ENCODE measurements at regions of chr1 and their contacts with region 1.

Region 1: GRCh38 chr1:98794196-98794886 is 132.8 kb downstream of the SNX7 start:
- DNase-seq: peak; percentile 54
- H3K4me3 ChIP-seq: peak overlapping the region in 1 of 2 experiments; percentile 26; a peak in 1 of 4 replicates
- H3K27ac ChIP-seq: peak overlapping the region in 1 of 2 experiments; percentile 60; a peak in 1 of 4 replicates
- H3K4me1 ChIP-seq: peaks cover 0 to 4% of the 10 kb centered on the region in 2 experiments; a peak in 2 of 4 replicates
- H3K27me3 ChIP-seq: no peaks in the 10 kb centered on the region
- CTCF ChIP-seq: peak; percentile 87
- EP300 ChIP-seq: peak in 1 of 2 experiments; percentile 86; a peak in 2 of 4 replicates
- RAD21 ChIP-seq: peak; percentile 95

Region 2: GRCh38 chr1:98523256-98523655 is 271.1 kb before region 1 on chr1:
- CTCF ChIA-PET with region 1: no interaction called
- POLR2A ChIA-PET with region 1: no interaction called
- DNase-seq: no peak
- H3K4me3 ChIP-seq: no peak overlapping the region
- H3K27ac ChIP-seq: no peak overlapping the region
- H3K4me1 ChIP-seq: no peaks in the 10 kb centered on the region
- H3K27me3 ChIP-seq: no peaks in the 10 kb centered on the region
- CTCF ChIP-seq: no peak
- EP300 ChIP-seq: no peak
- RAD21 ChIP-seq: no peak

Region 3: GRCh38 chr1:98669355-98670296 is 124.7 kb before region 1 on chr1:
- CTCF ChIA-PET with region 1: no interaction called
- POLR2A ChIA-PET with region 1: no interaction called
- DNase-seq: peak; percentile 33
- H3K4me3 ChIP-seq: no peak overlapping the region; a peak in 1 of 4 replicates
- H3K27ac ChIP-seq: peak overlapping the region; percentile 83 to 89
- H3K4me1 ChIP-seq: peaks cover 16 to 29% of the 10 kb centered on the region in 2 experiments
- H3K27me3 ChIP-seq: no peaks in the 10 kb centered on the region
- CTCF ChIP-seq: no peak
- EP300 ChIP-seq: peak in 1 of 2 experiments; percentile 24; a peak in 1 of 4 replicates
- RAD21 ChIP-seq: no peak

Region 4: GRCh38 chr1:98749152-98749756 is 45.1 kb before region 1 on chr1:
- CTCF ChIA-PET with region 1: interaction called, 28 read pairs
- POLR2A ChIA-PET with region 1: no interaction called
- DNase-seq: no peak
- H3K4me3 ChIP-seq: no peak overlapping the region
- H3K27ac ChIP-seq: no peak overlapping the region
- H3K4me1 ChIP-seq: peaks cover 0 to 4% of the 10 kb centered on the region in 2 experiments; a peak in 2 of 4 replicates
- H3K27me3 ChIP-seq: no peaks in the 10 kb centered on the region
- CTCF ChIP-seq: peak; percentile 70
- EP300 ChIP-seq: no peak
- RAD21 ChIP-seq: peak; percentile 65

Region 5: DNA sequence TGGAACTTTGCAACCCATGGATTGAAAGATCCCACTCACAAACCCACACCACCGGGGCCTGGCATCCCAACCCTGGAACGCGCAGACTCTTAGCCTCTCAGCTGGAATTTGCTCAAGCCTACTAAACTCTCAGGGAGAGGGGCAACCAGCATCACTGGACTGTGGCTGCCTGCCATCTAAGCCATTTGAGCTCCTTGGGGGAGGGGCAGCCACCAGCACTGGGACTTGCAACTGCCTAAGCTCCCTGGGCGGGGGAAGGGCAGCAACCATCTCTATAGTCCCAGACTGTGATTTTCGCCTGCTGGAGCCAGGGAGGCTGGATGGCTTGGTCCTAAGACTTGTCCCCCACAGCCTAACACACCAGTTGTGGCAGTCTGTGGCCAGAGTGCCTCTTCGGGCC is 10.5 kb before region 1 on chr1:
- CTCF ChIA-PET with region 1: interaction called, 12 read pairs
- POLR2A ChIA-PET with region 1: no interaction called
- DNase-seq: no peak
- H3K4me3 ChIP-seq: no peak overlapping the region
- H3K27ac ChIP-seq: no peak overlapping the region
- H3K4me1 ChIP-seq: no peaks in the 10 kb centered on the region
- H3K27me3 ChIP-seq: no peaks in the 10 kb centered on the region
- CTCF ChIP-seq: no peak
- EP300 ChIP-seq: no peak
- RAD21 ChIP-seq: no peak

Region 6: GRCh38 chr1:98860329-98860728 is 66.0 kb after region 1 on chr1:
- CTCF ChIA-PET with region 1: no interaction called
- POLR2A ChIA-PET with region 1: no interaction called
- DNase-seq: no peak
- H3K4me3 ChIP-seq: no peak overlapping the region
- H3K27ac ChIP-seq: no peak overlapping the region
- H3K4me1 ChIP-seq: no peaks in the 10 kb centered on the region
- H3K27me3 ChIP-seq: no peaks in the 10 kb centered on the region; the same call in 1 of the 2 replicates
- CTCF ChIP-seq: no peak
- EP300 ChIP-seq: no peak
- RAD21 ChIP-seq: no peak

Region 7: GRCh38 chr1:99173900-99174299 is 379.6 kb after region 1 on chr1:
- CTCF ChIA-PET with region 1: interaction called, 12 read pairs
- POLR2A ChIA-PET with region 1: no interaction called
- DNase-seq: no peak
- H3K4me3 ChIP-seq: no peak overlapping the region
- H3K27ac ChIP-seq: peak overlapping the region in 1 of 2 experiments; percentile 76; a peak in 1 of 4 replicates
- H3K4me1 ChIP-seq: peaks cover 14 to 27% of the 10 kb centered on the region in 2 experiments
- H3K27me3 ChIP-seq: no peaks in the 10 kb centered on the region
- CTCF ChIP-seq: no peak
- EP300 ChIP-seq: no peak
- RAD21 ChIP-seq: no peak

Region 8: DNA sequence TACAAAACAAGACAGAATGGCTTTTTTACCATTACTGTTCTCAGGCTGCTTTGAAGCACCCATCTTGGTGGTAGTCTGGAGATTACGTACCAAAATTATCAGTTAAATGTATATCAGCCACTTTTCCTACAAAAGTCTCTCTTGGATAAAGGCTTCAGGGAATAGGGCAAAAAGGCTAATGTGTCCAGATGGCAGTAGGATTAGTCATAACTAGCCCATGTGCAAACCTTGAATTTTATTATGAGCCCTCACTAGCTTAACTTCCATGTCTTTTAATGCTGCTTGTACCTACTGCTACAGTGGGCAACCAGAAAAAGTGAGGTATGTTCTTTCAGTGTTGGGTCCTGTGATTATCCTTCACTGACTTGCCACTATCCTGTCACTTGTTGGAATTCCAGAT is 521.0 kb after region 1 on chr1:
- CTCF ChIA-PET with region 1: no interaction called
- POLR2A ChIA-PET with region 1: no interaction called
- DNase-seq: no peak
- H3K4me3 ChIP-seq: no peak overlapping the region
- H3K27ac ChIP-seq: no peak overlapping the region
- H3K4me1 ChIP-seq: no peaks in the 10 kb centered on the region
- H3K27me3 ChIP-seq: no peaks in the 10 kb centered on the region
- CTCF ChIP-seq: no peak
- EP300 ChIP-seq: no peak
- RAD21 ChIP-seq: no peak

Region 9: DNA sequence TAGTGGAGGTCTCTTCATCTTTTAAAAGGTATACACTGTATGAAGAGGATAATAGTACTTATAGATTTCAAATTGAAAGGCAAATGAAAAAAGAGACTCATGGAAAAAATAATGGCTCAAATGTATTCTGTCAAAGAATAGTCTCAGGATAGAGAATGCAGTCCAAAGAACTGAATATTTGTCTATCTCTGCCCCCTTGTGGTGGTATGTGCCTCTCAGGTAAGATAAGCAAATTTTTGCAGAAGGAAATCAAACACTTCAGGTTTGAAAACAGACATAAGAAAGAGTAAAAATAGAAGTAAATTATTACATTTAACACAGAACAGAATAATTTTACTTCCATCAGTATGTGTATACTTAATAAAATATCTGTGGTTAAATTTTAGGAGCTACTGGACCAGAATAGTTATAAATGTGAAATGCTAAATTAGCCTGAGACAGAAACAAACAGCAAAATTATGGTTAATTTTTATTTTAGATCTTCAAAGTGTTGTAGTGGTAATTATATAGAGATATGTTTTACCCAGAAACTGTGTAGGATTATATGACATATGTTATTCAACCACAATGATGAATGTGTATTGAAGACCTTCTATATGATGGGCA is 687.2 kb after region 1 on chr1:
- CTCF ChIA-PET with region 1: interaction called, 35 read pairs
- POLR2A ChIA-PET with region 1: no interaction called
- DNase-seq: peak; percentile 30
- H3K4me3 ChIP-seq: no peak overlapping the region; a peak in 1 of 4 replicates
- H3K27ac ChIP-seq: peak overlapping the region in 1 of 2 experiments; percentile 77; a peak in 2 of 4 replicates
- H3K4me1 ChIP-seq: no peaks in the 10 kb centered on the region; a peak in 2 of 4 replicates
- H3K27me3 ChIP-seq: no peaks in the 10 kb centered on the region
- CTCF ChIP-seq: peak; percentile 92
- EP300 ChIP-seq: no peak
- RAD21 ChIP-seq: peak; percentile 98